ENCODE measurements at regions of chr7 and their contacts with region 1.

Region 1: GRCh38 chr7:106176414-106177299 is 64.5 kb upstream of the SYPL1 start:
- DNase-seq: no peak
- ATAC-seq: peak; percentile 76
- H3K4me3 ChIP-seq: no peak overlapping the region
- H3K27ac ChIP-seq: no peak overlapping the region
- H3K4me1 ChIP-seq: peaks cover 12% of the 10 kb centered on the region
- H3K27me3 ChIP-seq: no peaks in the 10 kb centered on the region
- CTCF ChIP-seq: peak; percentile 95 to 98 (median 96)
- EP300 ChIP-seq: no peak
- POLR2A ChIP-seq: no peak
- RAD21 ChIP-seq: peak; percentile 96

Region 2: GRCh38 chr7:106196460-106197021 is 19.9 kb after region 1 on chr7:
- CTCF ChIA-PET with region 1: interaction called, 13 read pairs
- POLR2A ChIA-PET with region 1: no interaction called
- RAD21 ChIA-PET with region 1: interaction called, 3 read pairs
- SMC1A ChIA-PET with region 1: interaction called, 9 read pairs
- in situ Hi-C with region 1: no loop called
- intact Hi-C with region 1: no loop called
- DNase-seq: no peak
- ATAC-seq: no peak
- H3K4me3 ChIP-seq: no peak overlapping the region
- H3K27ac ChIP-seq: no peak overlapping the region
- H3K4me1 ChIP-seq: no peaks in the 10 kb centered on the region
- H3K27me3 ChIP-seq: no peaks in the 10 kb centered on the region
- CTCF ChIP-seq: no peak
- EP300 ChIP-seq: no peak
- POLR2A ChIP-seq: no peak
- RAD21 ChIP-seq: no peak

Region 3: DNA sequence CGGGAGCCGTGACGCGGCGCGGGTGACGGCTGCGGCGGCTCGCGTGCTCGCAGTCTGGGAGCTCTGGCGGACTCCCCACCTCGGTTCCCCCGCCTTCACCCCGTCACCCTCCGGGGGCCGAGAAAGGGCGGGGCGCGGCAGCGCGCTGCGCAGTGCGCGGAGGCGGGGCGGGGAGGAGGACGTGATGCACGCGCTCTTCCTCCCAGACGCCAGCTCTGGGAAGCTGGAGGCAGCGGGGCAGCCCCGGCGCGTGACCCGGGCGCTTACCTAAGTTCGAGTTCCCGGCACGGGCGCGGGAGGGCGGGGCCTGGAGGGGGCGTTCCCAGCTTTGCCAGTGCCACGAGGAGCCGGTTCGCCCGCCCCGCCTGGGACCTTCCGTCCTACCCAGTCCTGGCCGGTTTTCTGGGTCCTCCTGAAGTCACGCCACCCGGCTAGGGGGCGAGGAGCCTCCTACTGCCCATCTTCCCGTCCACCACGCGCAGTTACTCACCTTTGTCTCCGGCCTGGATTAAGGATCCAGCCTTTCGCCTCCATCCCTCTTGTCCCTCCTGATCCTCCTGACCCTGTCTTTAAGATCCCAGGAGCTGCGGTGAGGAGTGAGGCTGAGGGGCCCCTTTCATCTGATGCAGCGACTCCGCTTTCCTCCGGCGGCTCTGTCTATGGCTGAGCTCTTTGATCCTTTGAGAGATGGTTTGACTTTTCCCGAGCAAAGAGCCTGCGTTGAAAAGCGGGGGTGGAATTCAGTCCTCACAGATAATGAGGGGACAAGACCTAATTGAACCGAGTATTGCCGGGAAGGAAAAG is 108.6 kb after region 1 on chr7:
- CTCF ChIA-PET with region 1: interaction called, 16 read pairs
- POLR2A ChIA-PET with region 1: interaction called, 11 read pairs
- RAD21 ChIA-PET with region 1: interaction called, 58 read pairs
- SMC1A ChIA-PET with region 1: interaction called, 43 read pairs
- in situ Hi-C with region 1: no loop called
- intact Hi-C with region 1: loop called (anchors 2 kb)
- DNase-seq: peak; percentile 97
- ATAC-seq: peak; percentile 77
- H3K4me3 ChIP-seq: peak overlapping the region; percentile 99
- H3K27ac ChIP-seq: peak overlapping the region; percentile 100
- H3K4me1 ChIP-seq: peaks cover 3% of the 10 kb centered on the region
- H3K27me3 ChIP-seq: no peaks in the 10 kb centered on the region
- CTCF ChIP-seq: no peak
- EP300 ChIP-seq: peak; percentile 42 to 52; a peak in 2 of 4 replicates
- POLR2A ChIP-seq: peak; percentile 78
- RAD21 ChIP-seq: no peak

Region 4: GRCh38 chr7:106425017-106425719 is 248.5 kb after region 1 on chr7:
- CTCF ChIA-PET with region 1: interaction called, 4 read pairs
- POLR2A ChIA-PET with region 1: no interaction called
- RAD21 ChIA-PET with region 1: interaction called, 7 read pairs
- SMC1A ChIA-PET with region 1: interaction called, 11 read pairs
- in situ Hi-C with region 1: no loop called
- intact Hi-C with region 1: no loop called
- DNase-seq: peak; percentile 93
- ATAC-seq: peak; percentile 94
- H3K4me3 ChIP-seq: peak overlapping the region; percentile 37; the same call in 1 of the 2 replicates
- H3K27ac ChIP-seq: peak overlapping the region; percentile 81
- H3K4me1 ChIP-seq: peaks cover 23% of the 10 kb centered on the region
- H3K27me3 ChIP-seq: no peaks in the 10 kb centered on the region
- CTCF ChIP-seq: no peak
- EP300 ChIP-seq: peak; percentile 83 to 85
- POLR2A ChIP-seq: no peak
- RAD21 ChIP-seq: no peak

Region 5: GRCh38 chr7:106485031-106485551 is 308.4 kb after region 1 on chr7:
- CTCF ChIA-PET with region 1: interaction called, 12 read pairs
- POLR2A ChIA-PET with region 1: no interaction called
- RAD21 ChIA-PET with region 1: no interaction called
- SMC1A ChIA-PET with region 1: interaction called, 13 read pairs
- in situ Hi-C with region 1: no loop called
- intact Hi-C with region 1: no loop called
- DNase-seq: no peak
- ATAC-seq: peak; percentile 65
- H3K4me3 ChIP-seq: no peak overlapping the region
- H3K27ac ChIP-seq: no peak overlapping the region
- H3K4me1 ChIP-seq: peaks cover 11% of the 10 kb centered on the region
- H3K27me3 ChIP-seq: no peaks in the 10 kb centered on the region
- CTCF ChIP-seq: no peak
- EP300 ChIP-seq: no peak
- POLR2A ChIP-seq: no peak
- RAD21 ChIP-seq: no peak

Region 6: DNA sequence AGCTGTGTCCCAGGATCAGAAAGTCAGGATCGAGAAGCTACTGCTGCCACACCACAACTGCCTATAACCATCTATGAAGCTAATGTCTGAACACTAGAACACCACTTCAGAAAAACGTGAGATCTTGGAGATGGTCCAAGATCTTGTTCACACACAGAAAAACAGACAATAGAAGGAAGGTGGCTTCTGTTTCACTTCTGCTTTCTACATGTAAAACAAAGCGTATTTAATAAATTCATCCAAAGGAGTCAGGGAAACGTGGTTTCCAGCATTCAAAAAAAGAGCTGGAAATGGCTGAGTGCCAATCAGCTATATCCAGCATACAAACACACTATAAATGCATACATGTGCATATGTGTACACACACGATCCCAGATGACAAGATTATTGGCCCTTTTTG is 554.5 kb after region 1 on chr7:
- CTCF ChIA-PET with region 1: interaction called, 39 read pairs
- POLR2A ChIA-PET with region 1: no interaction called
- RAD21 ChIA-PET with region 1: interaction called, 38 read pairs
- SMC1A ChIA-PET with region 1: interaction called, 7 read pairs
- in situ Hi-C with region 1: loop called (anchors 5 kb)
- intact Hi-C with region 1: loop called (anchors 1 kb)
- DNase-seq: peak; percentile 91
- ATAC-seq: peak; percentile 95
- H3K4me3 ChIP-seq: no peak overlapping the region
- H3K27ac ChIP-seq: peak overlapping the region; percentile 40; the same call in 1 of the 2 replicates
- H3K4me1 ChIP-seq: peaks cover 17% of the 10 kb centered on the region
- H3K27me3 ChIP-seq: no peaks in the 10 kb centered on the region
- CTCF ChIP-seq: no peak
- EP300 ChIP-seq: peak in 1 of 2 experiments; percentile 80; a peak in 2 of 4 replicates
- POLR2A ChIP-seq: no peak
- RAD21 ChIP-seq: 0 out of 2 replicates have a peak, but pooled peaks have one; percentile 7